CD4-positive, alpha-beta T cell (primary cell): ENCODE measurements at regions of chr17 and their contacts with region 1.

Region 1: GRCh38 chr17:49670002-49670401 is 7.9 kb downstream of the SPOP start:
- DNase-seq: no peak
- ATAC-seq: no peak
- H3K4me3 ChIP-seq: no peak overlapping the region
- H3K4me3 Mint-ChIP-seq: no peak overlapping the region
- H3K27ac ChIP-seq: no peak overlapping the region
- H3K27ac Mint-ChIP-seq: peak overlapping the region; percentile 78
- H3K4me1 ChIP-seq: peaks cover 22% of the 10 kb centered on the region
- H3K4me1 Mint-ChIP-seq: peaks cover 65% of the 10 kb centered on the region
- H3K27me3 ChIP-seq: no peaks in the 10 kb centered on the region
- H3K27me3 Mint-ChIP-seq: no peaks in the 10 kb centered on the region
- CTCF ChIP-seq: no peak

Region 2: DNA sequence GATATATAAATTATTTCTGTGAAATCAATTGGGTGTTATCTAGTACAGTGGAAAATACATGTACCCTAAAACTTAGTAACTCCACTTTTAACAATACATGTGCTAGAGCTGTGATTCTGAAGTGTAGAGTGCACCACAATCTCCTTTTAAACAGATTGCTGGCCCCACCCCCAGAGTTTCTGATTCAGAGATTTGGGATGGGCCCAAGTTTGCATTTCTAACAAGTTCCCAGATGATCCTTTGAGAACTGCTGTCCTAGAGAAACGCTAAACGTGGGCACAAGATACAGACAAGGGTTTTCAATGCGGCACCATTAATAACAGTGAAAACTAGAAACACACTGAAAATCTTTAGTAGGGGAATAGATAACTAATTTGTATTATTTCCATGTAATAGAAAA is 45.1 kb before region 1 on chr17:
- CTCF ChIA-PET with region 1: no interaction called
- POLR2A ChIA-PET with region 1: no interaction called
- intact Hi-C with region 1: loop called in 1 of 2 experiments (anchors 5 kb)
- DNase-seq: no peak
- ATAC-seq: no peak
- H3K4me3 ChIP-seq: no peak overlapping the region
- H3K4me3 Mint-ChIP-seq: no peak overlapping the region
- H3K27ac ChIP-seq: no peak overlapping the region
- H3K27ac Mint-ChIP-seq: no peak overlapping the region
- H3K4me1 ChIP-seq: no peaks in the 10 kb centered on the region
- H3K4me1 Mint-ChIP-seq: peaks cover 47% of the 10 kb centered on the region
- H3K27me3 ChIP-seq: no peaks in the 10 kb centered on the region
- H3K27me3 Mint-ChIP-seq: no peaks in the 10 kb centered on the region
- CTCF ChIP-seq: no peak